ENCODE measurements at regions of chr4 and their contacts with region 1.

Region 1: DNA sequence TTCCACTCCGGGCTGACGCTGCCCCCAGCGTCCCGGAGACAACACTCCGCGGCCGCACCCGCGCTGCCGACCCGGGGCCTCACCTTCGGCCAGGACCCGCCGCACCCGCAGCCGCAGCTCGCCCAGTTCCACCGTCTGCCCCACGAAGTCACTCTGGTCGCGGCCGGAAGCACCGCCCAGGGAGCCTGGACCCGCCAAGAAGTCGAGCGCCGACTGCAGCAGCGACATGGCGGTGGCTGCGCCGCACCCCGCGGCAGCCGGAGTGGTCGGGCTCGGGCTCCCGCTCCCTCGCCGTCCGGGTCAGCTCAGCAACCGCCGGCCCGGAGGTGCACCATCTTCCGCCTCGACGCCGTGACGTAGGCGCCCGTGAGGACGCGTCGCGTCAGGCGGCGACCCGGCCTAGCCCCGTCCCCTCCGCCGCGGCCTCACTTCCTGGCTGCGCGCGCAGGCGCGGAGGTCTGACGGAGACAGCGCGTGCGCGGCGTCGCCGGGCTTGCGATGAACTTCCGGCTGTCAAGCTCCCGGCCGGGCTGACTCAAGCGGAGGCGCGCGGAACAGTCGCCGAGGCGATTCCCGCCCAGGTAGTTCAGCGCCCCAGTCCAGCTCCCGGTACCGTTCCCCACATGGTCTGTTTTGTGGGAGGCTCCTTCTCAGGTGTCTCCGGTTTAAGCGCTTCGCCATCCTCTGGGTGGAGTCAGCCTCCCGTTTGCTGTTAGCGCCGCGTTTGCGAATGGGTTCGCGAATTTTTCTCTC is at the starts of genes GAK and TMEM175:
- DNase-seq: peak; percentile 100
- H3K4me3 Mint-ChIP-seq: peak within 1 kb of the TSS; percentile 99
- H3K27ac Mint-ChIP-seq: peak within 1 kb of the TSS; percentile 95
- H3K4me1 Mint-ChIP-seq: peaks cover 40% of the 10 kb centered on the region
- H3K27me3 Mint-ChIP-seq: no peaks in the 10 kb centered on the region
- total RNA-seq, gene GAK: 131 and 147 TPM in 2 replicates
- total RNA-seq, gene TMEM175: 12.7 and 13.9 TPM in 2 replicates

Region 2: DNA sequence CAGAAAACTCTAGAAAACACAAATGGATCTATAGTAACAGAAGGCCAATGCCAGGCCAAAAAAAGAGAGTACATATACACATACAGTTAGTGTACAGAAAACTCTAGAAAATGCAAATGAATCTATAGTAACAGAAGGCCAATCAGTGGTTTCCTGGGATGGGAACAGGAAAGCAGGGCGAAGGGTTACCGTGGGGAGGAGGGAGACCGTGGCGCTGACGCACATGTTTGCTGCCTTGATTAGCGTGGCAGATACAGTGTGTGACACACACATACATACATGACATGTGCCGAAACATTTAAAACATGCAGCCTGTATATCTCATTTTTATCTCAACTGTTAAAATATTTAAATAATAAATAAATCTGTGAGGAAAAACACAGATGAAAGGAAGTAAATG is 14.7 kb before region 1 on chr4:
- intact Hi-C with region 1: loop called (anchors 1 kb)
- DNase-seq: no peak
- H3K4me3 Mint-ChIP-seq: no peak overlapping the region
- H3K27ac Mint-ChIP-seq: no peak overlapping the region
- H3K4me1 Mint-ChIP-seq: peaks cover 42% of the 10 kb centered on the region
- H3K27me3 Mint-ChIP-seq: no peaks in the 10 kb centered on the region

Region 3: DNA sequence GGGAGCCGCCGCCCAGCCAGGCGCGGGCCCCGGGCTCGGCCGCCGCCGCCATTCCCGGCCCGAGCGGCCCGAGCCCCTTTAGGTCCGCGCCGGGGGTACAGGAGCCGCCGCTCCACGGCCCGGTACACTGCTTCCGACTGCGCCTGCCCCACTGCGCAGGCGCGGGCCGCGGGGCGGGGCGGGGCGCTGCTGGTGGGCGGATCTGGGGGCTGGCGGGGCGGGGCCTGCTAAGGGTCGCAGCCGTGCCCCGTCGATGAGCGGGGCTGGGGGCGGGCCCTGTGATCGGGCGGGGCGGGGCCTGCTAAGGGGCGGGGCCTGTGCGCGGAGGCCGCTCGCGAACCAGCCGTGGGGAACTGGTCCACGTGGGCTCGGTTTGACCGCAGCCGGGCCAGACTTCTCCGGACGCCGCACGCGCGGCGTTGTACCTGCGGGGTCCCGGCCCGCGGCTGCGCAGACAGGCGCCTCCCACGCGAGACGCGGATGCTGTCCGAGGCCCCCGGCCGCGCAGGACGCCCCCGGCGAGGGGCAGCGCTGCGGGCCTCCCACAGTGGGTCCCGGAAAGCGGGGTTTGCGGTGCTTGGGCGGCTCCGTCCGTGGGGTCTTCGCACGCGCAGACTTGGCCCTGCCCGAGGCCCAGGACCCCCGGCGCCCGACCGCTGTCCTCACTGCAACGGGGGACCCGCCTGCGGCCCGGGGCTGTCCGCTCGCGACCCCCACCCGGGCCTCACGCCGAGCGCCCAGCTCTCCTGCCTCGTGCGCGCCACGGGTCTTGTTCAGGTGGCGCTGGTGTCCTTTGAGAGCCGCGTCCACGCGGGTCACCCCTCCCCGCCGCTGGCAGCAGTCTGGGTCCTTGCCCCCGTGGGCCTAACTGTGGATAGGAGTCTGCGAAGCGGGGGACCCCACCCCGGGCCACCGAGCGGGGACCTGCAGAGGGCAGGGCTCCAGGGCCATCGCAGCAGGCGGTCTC is 41.6 kb after region 1 on chr4 and contains the start of gene DGKQ:
- intact Hi-C with region 1: loop called (anchors 1 kb)
- DNase-seq: peak; percentile 95
- H3K4me3 Mint-ChIP-seq: peak within 1 kb of the TSS; percentile 67
- H3K27ac Mint-ChIP-seq: no peak within 1 kb of the TSS
- H3K4me1 Mint-ChIP-seq: peaks cover 5% of the 10 kb centered on the region
- H3K27me3 Mint-ChIP-seq: no peaks in the 10 kb centered on the region
- total RNA-seq, gene DGKQ: 15.2 and 16.6 TPM in 2 replicates

Region 4: GRCh38 chr4:986879-987623 is 54.9 kb after region 1 on chr4 and contains the start of gene IDUA:
- intact Hi-C with region 1: loop called (anchors 2 kb)
- DNase-seq: peak; percentile 96
- H3K4me3 Mint-ChIP-seq: peak within 1 kb of the TSS; percentile 86
- H3K27ac Mint-ChIP-seq: peak within 1 kb of the TSS; percentile 87
- H3K4me1 Mint-ChIP-seq: peaks cover 15% of the 10 kb centered on the region
- H3K27me3 Mint-ChIP-seq: no peaks in the 10 kb centered on the region
- total RNA-seq, gene IDUA: 30.4 and 31.2 TPM in 2 replicates

Region 5: GRCh38 chr4:1113311-1114009 is 181.3 kb after region 1 on chr4 and contains the start of gene RNF212:
- intact Hi-C with region 1: no loop called
- DNase-seq: peak; percentile 82
- H3K4me3 Mint-ChIP-seq: peak within 1 kb of the TSS; percentile 70
- H3K27ac Mint-ChIP-seq: peak within 1 kb of the TSS; percentile 20
- H3K4me1 Mint-ChIP-seq: peaks cover under 1% of the 10 kb centered on the region
- H3K27me3 Mint-ChIP-seq: peaks cover 37% of the 10 kb centered on the region
- total RNA-seq, gene RNF212: 1.0 and 1.8 TPM in 2 replicates

Measured in activated CD4-positive, alpha-beta T cell treated with anti-CD3 and anti-CD28 coated beads, Interleukin-2, amount 10 ng/mL, durations not matched to agents 24 days and 14 days (primary cell).